MCF 10A (cell line): ENCODE measurements at regions of chr7 and their contacts with region 1.

Region 1: GRCh38 chr7:131107337-131108211 is 220.1 kb upstream of the MKLN1 start:
- DNase-seq: peak; percentile 76
- H3K4me3 Mint-ChIP-seq: peak overlapping the region; percentile 75
- H3K27ac Mint-ChIP-seq: peak overlapping the region; percentile 70
- H3K4me1 Mint-ChIP-seq: peaks cover 46% of the 10 kb centered on the region
- H3K27me3 Mint-ChIP-seq: no peaks in the 10 kb centered on the region
- CTCF ChIP-seq: no peak

Region 2: GRCh38 chr7:131071786-131072504 is 35.6 kb before region 1 on chr7:
- CTCF ChIA-PET with region 1: interaction called, 4 read pairs
- POLR2A ChIA-PET with region 1: interaction called, 16 read pairs
- intact Hi-C with region 1: loop called (anchors 1 kb)
- DNase-seq: peak; percentile 92
- H3K4me3 Mint-ChIP-seq: no peak overlapping the region
- H3K27ac Mint-ChIP-seq: peak overlapping the region; percentile 46
- H3K4me1 Mint-ChIP-seq: peaks cover 40% of the 10 kb centered on the region
- H3K27me3 Mint-ChIP-seq: no peaks in the 10 kb centered on the region
- CTCF ChIP-seq: peak; percentile 23

Region 3: DNA sequence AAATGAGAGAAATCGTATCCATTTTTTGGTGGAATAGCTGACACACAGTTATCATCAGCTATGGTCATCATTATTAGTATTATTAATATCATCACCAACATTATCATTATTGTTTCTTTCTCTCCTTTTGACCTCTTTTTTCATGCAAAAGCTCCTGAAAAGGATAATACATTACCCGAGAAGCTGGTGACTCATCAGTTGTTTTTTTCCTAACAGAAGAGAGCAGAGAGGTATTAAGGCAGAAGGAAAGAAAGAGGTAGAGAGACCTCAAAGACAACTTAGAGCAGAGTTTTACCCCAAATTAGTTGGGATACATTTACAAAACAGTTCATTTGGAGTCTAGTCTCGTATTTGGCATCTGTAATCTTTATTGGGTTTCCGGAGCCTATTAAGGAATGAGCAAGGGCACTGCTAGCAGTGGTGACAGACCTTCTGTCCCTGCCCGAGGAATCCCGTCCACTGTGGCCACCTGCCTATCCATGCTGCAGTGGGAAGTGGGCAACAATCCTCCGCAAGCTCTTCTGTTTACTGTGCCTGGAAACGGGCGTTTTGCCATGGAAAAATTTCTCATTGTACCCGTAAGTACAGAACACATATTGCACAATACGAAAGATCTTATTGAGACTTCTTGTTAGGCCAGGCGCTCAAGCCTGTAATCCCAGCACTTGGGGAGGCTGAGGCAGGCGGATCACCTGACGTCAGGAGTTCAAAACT is 50.1 kb after region 1 on chr7:
- CTCF ChIA-PET with region 1: interaction called, 5 read pairs
- POLR2A ChIA-PET with region 1: interaction called, 139 read pairs
- intact Hi-C with region 1: no loop called
- DNase-seq: peak; percentile 88
- H3K4me3 Mint-ChIP-seq: peak overlapping the region; percentile 38
- H3K27ac Mint-ChIP-seq: peak overlapping the region; percentile 96
- H3K4me1 Mint-ChIP-seq: peaks cover 26% of the 10 kb centered on the region
- H3K27me3 Mint-ChIP-seq: no peaks in the 10 kb centered on the region
- CTCF ChIP-seq: no peak

Region 4: DNA sequence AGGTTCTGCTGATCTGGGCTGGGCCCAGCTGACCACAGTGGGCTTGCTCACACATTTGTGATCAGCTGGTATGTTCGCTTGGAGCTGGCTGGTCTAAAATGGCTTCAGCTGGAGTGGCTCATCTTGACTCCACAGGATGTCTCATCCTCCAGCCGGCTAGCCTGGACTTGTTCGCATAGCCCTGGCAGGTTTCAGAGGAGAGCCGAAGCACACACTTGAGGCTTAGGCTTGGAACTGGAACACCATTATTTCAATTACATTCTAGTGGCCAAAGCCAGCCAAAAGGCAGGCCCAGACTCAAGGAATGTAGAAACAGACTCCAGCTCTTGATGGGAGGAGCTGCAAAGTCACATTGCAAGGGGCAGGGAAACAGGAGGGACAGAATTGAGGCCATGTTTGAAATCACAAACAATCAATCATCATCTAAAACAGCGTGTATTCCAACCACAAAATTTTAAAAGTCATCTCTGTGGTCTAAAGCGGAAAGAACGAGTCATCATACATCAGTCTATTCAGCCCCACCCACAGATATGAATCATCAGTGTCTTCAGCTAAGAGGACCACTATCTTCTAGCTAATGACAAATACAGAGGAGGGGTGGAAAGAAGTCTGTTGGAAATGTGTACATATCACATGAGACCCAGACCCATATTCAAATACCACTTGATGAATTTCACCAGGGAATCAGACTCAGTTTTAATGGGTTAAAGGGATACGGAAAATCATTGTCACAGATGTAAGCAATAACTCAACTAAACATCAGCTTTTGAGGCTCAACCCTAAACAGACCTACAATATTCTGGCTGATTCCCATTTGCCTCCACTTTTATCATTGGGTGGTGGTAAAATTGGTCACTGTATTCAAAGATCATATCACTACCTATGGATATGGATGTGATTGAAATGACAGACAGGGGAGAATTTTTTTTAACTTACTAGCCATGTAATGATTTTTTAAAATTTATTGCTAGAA is 81.1 kb after region 1 on chr7:
- CTCF ChIA-PET with region 1: interaction called, 6 read pairs
- POLR2A ChIA-PET with region 1: interaction called, 36 read pairs
- intact Hi-C with region 1: loop called (anchors 1 kb)
- DNase-seq: peak; percentile 94
- H3K4me3 Mint-ChIP-seq: peak overlapping the region; percentile 48
- H3K27ac Mint-ChIP-seq: peak overlapping the region; percentile 90
- H3K4me1 Mint-ChIP-seq: peaks cover 18% of the 10 kb centered on the region
- H3K27me3 Mint-ChIP-seq: no peaks in the 10 kb centered on the region
- CTCF ChIP-seq: no peak

Region 5: DNA sequence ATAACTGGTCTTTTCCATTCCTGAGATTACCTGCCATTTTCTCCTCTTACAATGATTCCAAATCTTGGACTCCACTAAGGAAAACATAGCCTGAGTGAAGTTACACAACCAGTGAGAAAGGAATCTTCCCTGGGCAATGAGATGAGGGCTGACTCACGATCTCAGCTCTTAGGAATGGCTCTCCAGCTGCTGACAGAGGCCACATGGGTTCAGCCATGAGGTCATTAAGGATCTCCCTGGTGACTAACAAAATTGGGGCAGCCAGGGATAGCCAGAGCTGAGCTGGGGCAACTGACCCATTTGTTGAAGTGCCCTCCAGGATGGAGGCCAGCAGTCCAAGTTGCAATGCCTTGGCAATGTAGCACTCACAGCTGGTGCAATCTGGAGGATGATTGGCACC is 141.4 kb after region 1 on chr7:
- CTCF ChIA-PET with region 1: no interaction called
- POLR2A ChIA-PET with region 1: interaction called, 10 read pairs
- intact Hi-C with region 1: no loop called
- DNase-seq: peak; percentile 95
- H3K4me3 Mint-ChIP-seq: no peak overlapping the region
- H3K27ac Mint-ChIP-seq: peak overlapping the region; percentile 17
- H3K4me1 Mint-ChIP-seq: peaks cover 27% of the 10 kb centered on the region
- H3K27me3 Mint-ChIP-seq: no peaks in the 10 kb centered on the region
- CTCF ChIP-seq: no peak

Region 6: DNA sequence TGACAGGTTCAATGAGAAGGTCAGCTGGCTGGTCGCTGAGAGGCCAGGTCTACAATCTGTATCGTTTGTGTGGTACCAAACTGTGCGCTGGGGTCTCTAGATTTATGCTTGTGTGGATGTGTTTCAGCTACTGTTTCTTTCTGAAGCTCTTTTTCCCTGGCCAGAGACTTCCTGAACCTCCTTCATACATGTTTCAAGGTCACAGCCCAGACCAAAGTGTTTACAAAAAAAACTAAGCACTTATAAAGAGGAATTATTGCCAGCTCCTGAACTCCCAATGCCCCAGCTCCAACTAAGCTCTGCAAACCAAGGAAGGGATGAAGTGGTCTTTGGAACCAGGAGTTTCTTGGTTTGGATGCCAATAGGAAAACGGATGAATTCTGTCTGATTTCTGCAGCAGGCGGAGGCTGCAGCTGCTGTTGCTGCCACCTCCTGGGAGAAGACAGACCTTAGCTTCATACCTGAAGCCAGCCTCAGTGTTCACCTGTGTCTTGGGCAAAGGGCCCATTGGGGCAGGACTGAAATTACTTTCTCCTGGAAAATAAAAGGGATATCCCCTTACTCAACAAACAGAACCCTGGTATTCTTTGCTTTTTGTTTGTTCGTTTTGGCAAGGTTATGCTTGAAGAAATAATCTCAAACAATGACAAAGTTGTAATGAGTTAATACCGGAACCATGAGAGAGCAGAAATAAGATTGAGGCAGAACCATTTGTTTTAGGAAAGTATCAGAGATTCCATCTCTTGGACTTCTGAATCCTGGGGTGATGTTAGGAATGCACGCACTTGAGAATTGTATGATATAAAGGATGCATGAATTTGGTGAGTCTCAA is 195.5 kb after region 1 on chr7:
- CTCF ChIA-PET with region 1: interaction called, 9 read pairs
- POLR2A ChIA-PET with region 1: interaction called, 63 read pairs
- intact Hi-C with region 1: loop called (anchors 1 kb)
- DNase-seq: peak; percentile 57
- H3K4me3 Mint-ChIP-seq: no peak overlapping the region
- H3K27ac Mint-ChIP-seq: no peak overlapping the region
- H3K4me1 Mint-ChIP-seq: peaks cover 12% of the 10 kb centered on the region
- H3K27me3 Mint-ChIP-seq: no peaks in the 10 kb centered on the region
- CTCF ChIP-seq: peak; percentile 81

Region 7: GRCh38 chr7:131424219-131424822 is 316.7 kb after region 1 on chr7:
- CTCF ChIA-PET with region 1: interaction called, 6 read pairs
- POLR2A ChIA-PET with region 1: interaction called, 4 read pairs
- intact Hi-C with region 1: loop called (anchors 1 kb)
- DNase-seq: peak; percentile 39
- H3K4me3 Mint-ChIP-seq: no peak overlapping the region
- H3K27ac Mint-ChIP-seq: no peak overlapping the region
- H3K4me1 Mint-ChIP-seq: peaks cover 6% of the 10 kb centered on the region
- H3K27me3 Mint-ChIP-seq: no peaks in the 10 kb centered on the region
- CTCF ChIP-seq: peak; percentile 60

Region 8: DNA sequence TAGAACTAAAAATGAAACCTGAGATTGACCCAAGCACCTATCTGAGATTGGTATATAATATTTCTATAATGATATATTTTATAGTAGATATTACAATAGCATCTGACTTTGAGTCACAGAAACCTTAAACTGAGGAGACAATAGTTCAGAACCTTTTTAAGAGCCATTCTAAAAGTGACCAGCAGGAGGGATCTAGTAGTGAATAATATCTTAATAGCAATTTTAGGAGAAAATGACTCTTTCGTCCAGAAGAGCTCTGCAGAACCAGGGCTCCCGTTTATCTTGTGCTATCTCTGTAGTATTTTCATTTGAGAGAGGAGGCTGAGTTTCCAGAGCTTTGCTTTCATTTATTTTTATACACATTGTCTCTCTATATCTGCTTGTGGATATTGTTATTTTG is 380.8 kb after region 1 on chr7:
- CTCF ChIA-PET with region 1: no interaction called
- POLR2A ChIA-PET with region 1: no interaction called
- intact Hi-C with region 1: no loop called
- DNase-seq: no peak
- H3K4me3 Mint-ChIP-seq: no peak overlapping the region
- H3K27ac Mint-ChIP-seq: no peak overlapping the region
- H3K4me1 Mint-ChIP-seq: no peaks in the 10 kb centered on the region
- H3K27me3 Mint-ChIP-seq: no peaks in the 10 kb centered on the region
- CTCF ChIP-seq: peak; percentile 18

Region 9: DNA sequence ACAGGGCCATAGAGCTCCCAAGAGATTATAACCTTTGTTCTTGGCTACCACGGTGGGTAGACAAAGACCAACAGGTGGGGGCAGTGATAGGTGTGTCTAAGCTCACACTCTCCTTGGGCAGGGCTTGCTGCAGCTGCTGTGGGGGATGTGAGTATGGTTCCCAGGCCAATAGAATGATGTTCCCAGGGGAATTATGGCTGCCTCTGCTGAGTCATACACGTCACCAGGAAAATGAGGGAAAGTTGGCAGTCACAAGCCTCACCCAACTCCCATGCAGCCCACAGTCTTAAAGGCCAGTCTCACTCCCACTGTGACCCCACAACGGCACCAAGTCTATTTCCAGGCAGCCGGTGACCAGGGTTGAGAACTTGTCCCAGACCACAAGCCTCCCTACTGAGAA is 902.2 kb after region 1 on chr7:
- CTCF ChIA-PET with region 1: no interaction called
- POLR2A ChIA-PET with region 1: no interaction called
- intact Hi-C with region 1: no loop called
- DNase-seq: no peak
- H3K4me3 Mint-ChIP-seq: no peak overlapping the region
- H3K27ac Mint-ChIP-seq: no peak overlapping the region
- H3K4me1 Mint-ChIP-seq: no peaks in the 10 kb centered on the region
- H3K27me3 Mint-ChIP-seq: peaks cover 24% of the 10 kb centered on the region
- CTCF ChIP-seq: no peak